ENCODE measurements at regions of chr9 and their contacts with region 1.

Region 1: GRCh38 chr9:128034821-128035764 is 32.0 kb downstream of the NAIF1 start:
- DNase-seq: peak; percentile 79
- H3K4me3 Mint-ChIP-seq: no peak overlapping the region
- H3K27ac Mint-ChIP-seq: no peak overlapping the region
- H3K4me1 Mint-ChIP-seq: no peaks in the 10 kb centered on the region
- H3K27me3 Mint-ChIP-seq: no peaks in the 10 kb centered on the region
- CTCF ChIP-seq: peak; percentile 78

Region 2: GRCh38 chr9:127809512-127810377 is 225.3 kb before region 1 on chr9:
- CTCF ChIA-PET with region 1: no interaction called
- intact Hi-C with region 1: no loop called
- DNase-seq: no peak
- H3K4me3 Mint-ChIP-seq: no peak overlapping the region
- H3K27ac Mint-ChIP-seq: no peak overlapping the region
- H3K4me1 Mint-ChIP-seq: no peaks in the 10 kb centered on the region
- H3K27me3 Mint-ChIP-seq: no peaks in the 10 kb centered on the region
- CTCF ChIP-seq: no peak

Region 3: DNA sequence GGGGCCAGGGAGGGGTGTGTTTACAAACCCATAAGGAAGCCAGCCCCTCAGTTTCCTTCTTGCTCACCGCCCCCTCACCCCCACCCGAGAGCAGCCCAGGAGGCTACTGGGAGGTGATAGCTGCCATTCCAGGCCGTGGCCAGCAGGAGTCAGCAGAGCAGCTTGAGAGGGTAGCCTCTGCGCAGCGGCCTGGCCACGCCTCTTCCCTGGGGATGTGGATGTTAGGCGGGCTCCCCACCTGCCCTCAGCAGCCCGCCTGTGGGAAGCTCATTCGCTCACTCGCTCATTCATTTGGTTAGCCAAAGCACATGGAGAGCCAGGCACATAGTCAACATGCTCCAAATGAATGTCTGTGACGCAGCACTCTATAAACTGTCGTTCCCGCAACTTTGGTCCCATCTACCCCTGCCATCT is 91.4 kb before region 1 on chr9:
- CTCF ChIA-PET with region 1: interaction called, 16 read pairs
- intact Hi-C with region 1: loop called (anchors 1 kb)
- DNase-seq: peak; percentile 82
- H3K4me3 Mint-ChIP-seq: no peak overlapping the region
- H3K27ac Mint-ChIP-seq: no peak overlapping the region
- H3K4me1 Mint-ChIP-seq: peaks cover 16% of the 10 kb centered on the region
- H3K27me3 Mint-ChIP-seq: no peaks in the 10 kb centered on the region
- CTCF ChIP-seq: peak; percentile 80

Region 4: GRCh38 chr9:127955294-127956035 is 79.6 kb before region 1 on chr9:
- CTCF ChIA-PET with region 1: interaction called, 16 read pairs
- intact Hi-C with region 1: no loop called
- DNase-seq: peak; percentile 87
- H3K4me3 Mint-ChIP-seq: peak overlapping the region; percentile 57
- H3K27ac Mint-ChIP-seq: peak overlapping the region; percentile 85
- H3K4me1 Mint-ChIP-seq: peaks cover 47% of the 10 kb centered on the region
- H3K27me3 Mint-ChIP-seq: no peaks in the 10 kb centered on the region
- CTCF ChIP-seq: peak; percentile 60